GM12878 (cell line): ENCODE measurements at regions of chr10 and their contacts with region 1.

Region 1: GRCh38 chr10:3873728-3874461 is 88.9 kb upstream of the KLF6 start:
- DNase-seq: peak; percentile 83
- ATAC-seq: peak; percentile 50
- H3K4me3 ChIP-seq: no peak overlapping the region
- H3K27ac ChIP-seq: peak overlapping the region; percentile 90
- H3K4me1 ChIP-seq: peaks cover 50% of the 10 kb centered on the region
- H3K27me3 ChIP-seq: no peaks in the 10 kb centered on the region
- CTCF ChIP-seq: no peak
- EP300 ChIP-seq: peak; percentile 97 to 100
- POLR2A ChIP-seq: no peak
- RAD21 ChIP-seq: peak; percentile 16; the same call in 1 of the 2 replicates

Region 2: DNA sequence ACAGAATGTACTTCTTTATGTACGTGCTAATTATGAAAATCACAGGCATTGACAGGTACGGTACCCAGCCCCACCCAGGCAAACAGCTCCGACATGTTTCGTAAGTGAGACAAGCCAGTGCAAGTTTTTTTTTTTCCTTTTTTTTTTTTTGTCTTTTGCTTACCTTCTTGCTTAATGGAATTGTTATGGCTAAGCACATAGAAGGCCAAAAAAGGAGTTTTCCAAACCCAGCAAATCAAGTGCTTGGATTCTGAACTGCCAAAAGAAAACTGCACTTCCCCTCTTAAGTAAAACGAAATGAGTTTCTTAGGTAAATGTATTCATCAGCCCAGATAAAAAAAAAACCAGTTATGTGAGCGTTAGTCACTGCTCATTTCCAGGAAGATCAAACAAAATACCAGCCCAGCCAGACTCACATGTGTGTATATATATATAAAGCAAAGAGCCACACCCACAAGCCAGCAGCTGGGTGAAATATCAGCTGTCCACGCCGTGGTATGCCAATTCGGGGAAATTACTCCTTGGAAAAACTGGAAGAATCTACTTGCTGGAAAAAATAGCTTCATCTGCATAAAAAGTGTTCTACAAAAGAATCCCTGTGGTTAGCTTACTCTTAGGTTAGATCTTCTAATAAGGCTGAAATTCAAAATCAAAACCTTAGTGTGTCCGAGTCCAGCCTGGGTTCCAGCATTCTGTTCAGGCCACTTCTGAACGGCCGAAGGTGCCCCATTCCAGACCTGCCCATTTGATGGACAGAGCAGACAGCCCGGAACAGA is 96.9 kb before region 1 on chr10:
- CTCF ChIA-PET with region 1: interaction called, 5 read pairs
- POLR2A ChIA-PET with region 1: interaction called, 51 read pairs
- RAD21 ChIA-PET with region 1: interaction called, 88 read pairs
- SMC1A ChIA-PET with region 1: interaction called, 68 read pairs
- in situ Hi-C with region 1: no loop called
- intact Hi-C with region 1: no loop called
- DNase-seq: no peak
- ATAC-seq: no peak
- H3K4me3 ChIP-seq: no peak overlapping the region
- H3K27ac ChIP-seq: no peak overlapping the region
- H3K4me1 ChIP-seq: peaks cover 10% of the 10 kb centered on the region
- H3K27me3 ChIP-seq: no peaks in the 10 kb centered on the region
- CTCF ChIP-seq: no peak
- EP300 ChIP-seq: no peak
- POLR2A ChIP-seq: no peak; the same call in 1 of the 2 replicates
- RAD21 ChIP-seq: no peak

Region 3: DNA sequence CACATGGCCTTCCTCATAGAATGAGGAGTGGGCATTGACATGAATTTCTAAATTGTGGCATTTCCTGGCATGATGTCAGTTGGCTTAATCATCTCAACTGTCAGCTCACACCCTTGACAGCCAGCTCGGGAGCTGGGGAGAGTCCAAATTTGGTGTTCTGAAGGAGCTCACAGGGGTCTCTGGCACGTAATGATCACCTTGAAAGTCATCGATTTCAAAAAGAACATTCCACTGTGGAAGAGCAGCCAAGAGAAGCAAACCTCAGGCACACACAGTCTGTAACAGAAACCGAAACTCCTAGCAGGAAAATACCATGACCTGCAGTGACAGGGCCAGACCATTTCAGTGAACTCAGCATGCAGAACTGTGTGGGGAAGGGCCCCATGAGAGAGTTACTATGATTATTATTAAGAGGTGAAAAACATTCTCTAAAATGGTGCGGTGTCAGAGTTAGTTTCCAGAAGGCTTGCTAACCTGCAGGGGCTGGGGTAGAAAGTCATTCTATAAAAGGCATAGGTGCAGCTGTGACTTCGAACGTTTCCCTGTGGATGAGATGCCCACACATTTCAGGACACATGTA is 62.5 kb before region 1 on chr10:
- CTCF ChIA-PET with region 1: interaction called, 5 read pairs
- POLR2A ChIA-PET with region 1: interaction called, 23 read pairs
- RAD21 ChIA-PET with region 1: interaction called, 52 read pairs
- SMC1A ChIA-PET with region 1: interaction called, 53 read pairs
- in situ Hi-C with region 1: no loop called
- intact Hi-C with region 1: loop called (anchors 1 kb)
- DNase-seq: peak; percentile 76
- ATAC-seq: peak; percentile 87
- H3K4me3 ChIP-seq: peak overlapping the region; percentile 55; the same call in 1 of the 2 replicates
- H3K27ac ChIP-seq: peak overlapping the region; percentile 82
- H3K4me1 ChIP-seq: peaks cover 42% of the 10 kb centered on the region
- H3K27me3 ChIP-seq: no peaks in the 10 kb centered on the region
- CTCF ChIP-seq: no peak
- EP300 ChIP-seq: peak; percentile 62 to 69; a peak in 3 of 4 replicates
- POLR2A ChIP-seq: peak; percentile 24; the same call in 1 of the 2 replicates
- RAD21 ChIP-seq: peak; percentile 26; the same call in 1 of the 2 replicates

Region 4: DNA sequence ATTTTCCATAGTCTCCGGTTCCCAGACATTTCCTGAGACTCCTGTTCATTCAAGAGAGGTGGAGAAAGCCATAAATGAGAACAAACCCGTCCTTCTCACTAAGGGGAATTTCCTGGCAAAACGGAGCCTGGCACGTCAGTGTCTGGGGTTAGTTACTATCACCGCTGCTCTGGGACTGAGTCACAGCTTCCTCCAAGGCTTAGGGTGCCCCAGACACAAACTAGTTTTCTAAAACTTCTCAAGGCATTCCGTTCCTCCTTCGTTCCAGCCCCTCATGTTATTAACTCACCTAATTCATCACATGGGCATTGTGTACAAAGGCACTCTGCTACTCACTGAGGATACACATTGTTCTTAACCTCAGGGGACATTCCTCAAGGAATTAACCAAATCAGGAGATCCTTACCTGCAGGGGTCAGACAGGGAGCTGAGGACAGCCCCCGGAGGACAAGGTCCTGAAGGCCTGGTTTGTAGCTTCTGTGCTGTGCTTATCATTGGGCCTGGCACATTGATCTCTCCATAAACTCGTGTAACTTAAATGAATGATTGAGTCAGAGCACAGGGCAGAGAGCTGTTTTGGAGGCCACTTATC is 14.1 kb after region 1 on chr10:
- CTCF ChIA-PET with region 1: interaction called, 12 read pairs
- POLR2A ChIA-PET with region 1: interaction called, 22 read pairs
- RAD21 ChIA-PET with region 1: interaction called, 45 read pairs
- SMC1A ChIA-PET with region 1: interaction called, 188 read pairs
- in situ Hi-C with region 1: no loop called
- intact Hi-C with region 1: no loop called
- DNase-seq: peak; percentile 66
- ATAC-seq: peak; percentile 92
- H3K4me3 ChIP-seq: no peak overlapping the region
- H3K27ac ChIP-seq: peak overlapping the region; percentile 67
- H3K4me1 ChIP-seq: peaks cover 15% of the 10 kb centered on the region
- H3K27me3 ChIP-seq: no peaks in the 10 kb centered on the region
- CTCF ChIP-seq: no peak
- EP300 ChIP-seq: peak in 1 of 2 experiments; percentile 54; a peak in 2 of 4 replicates
- POLR2A ChIP-seq: no peak
- RAD21 ChIP-seq: 0 out of 2 replicates have a peak, but pooled peaks have one; percentile 0

Region 5: DNA sequence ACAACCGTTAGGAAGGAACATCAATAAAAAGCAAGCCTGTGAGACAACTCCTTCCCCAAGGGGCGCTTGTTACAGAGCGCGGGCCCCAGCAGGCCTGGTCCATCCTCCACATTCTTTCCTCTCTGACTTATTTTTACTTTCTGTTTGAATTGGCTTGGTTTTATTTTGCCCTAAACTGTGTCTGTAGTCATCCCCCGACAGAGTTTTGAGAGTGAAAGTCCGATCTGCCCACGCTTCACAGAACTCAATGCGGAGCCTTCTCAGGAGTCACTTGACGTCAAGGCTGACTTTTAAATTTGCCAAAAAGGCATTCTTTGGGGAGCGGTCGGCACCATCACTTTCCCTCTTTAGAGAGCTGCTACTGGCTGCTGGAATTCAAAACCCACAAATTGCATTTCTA is 61.2 kb after region 1 on chr10:
- CTCF ChIA-PET with region 1: no interaction called
- POLR2A ChIA-PET with region 1: no interaction called
- RAD21 ChIA-PET with region 1: interaction called, 6 read pairs
- SMC1A ChIA-PET with region 1: interaction called, 5 read pairs
- in situ Hi-C with region 1: no loop called
- intact Hi-C with region 1: loop called (anchors 2 kb)
- DNase-seq: peak; percentile 92
- ATAC-seq: peak; percentile 99
- H3K4me3 ChIP-seq: no peak overlapping the region; the same call in 1 of the 2 replicates
- H3K27ac ChIP-seq: peak overlapping the region; percentile 83
- H3K4me1 ChIP-seq: peaks cover 19% of the 10 kb centered on the region
- H3K27me3 ChIP-seq: no peaks in the 10 kb centered on the region
- CTCF ChIP-seq: peak in 1 of 3 experiments; percentile 16; a peak in 1 of 6 replicates
- EP300 ChIP-seq: peak; percentile 86 to 90
- POLR2A ChIP-seq: no peak
- RAD21 ChIP-seq: peak; percentile 26